Activated CD8-positive, alpha-beta T cell treated with anti-CD3 and anti-CD28 coated beads for 36 hours (primary cell): ENCODE measurements at regions of chr5 and their contacts with region 1.

Region 1: DNA sequence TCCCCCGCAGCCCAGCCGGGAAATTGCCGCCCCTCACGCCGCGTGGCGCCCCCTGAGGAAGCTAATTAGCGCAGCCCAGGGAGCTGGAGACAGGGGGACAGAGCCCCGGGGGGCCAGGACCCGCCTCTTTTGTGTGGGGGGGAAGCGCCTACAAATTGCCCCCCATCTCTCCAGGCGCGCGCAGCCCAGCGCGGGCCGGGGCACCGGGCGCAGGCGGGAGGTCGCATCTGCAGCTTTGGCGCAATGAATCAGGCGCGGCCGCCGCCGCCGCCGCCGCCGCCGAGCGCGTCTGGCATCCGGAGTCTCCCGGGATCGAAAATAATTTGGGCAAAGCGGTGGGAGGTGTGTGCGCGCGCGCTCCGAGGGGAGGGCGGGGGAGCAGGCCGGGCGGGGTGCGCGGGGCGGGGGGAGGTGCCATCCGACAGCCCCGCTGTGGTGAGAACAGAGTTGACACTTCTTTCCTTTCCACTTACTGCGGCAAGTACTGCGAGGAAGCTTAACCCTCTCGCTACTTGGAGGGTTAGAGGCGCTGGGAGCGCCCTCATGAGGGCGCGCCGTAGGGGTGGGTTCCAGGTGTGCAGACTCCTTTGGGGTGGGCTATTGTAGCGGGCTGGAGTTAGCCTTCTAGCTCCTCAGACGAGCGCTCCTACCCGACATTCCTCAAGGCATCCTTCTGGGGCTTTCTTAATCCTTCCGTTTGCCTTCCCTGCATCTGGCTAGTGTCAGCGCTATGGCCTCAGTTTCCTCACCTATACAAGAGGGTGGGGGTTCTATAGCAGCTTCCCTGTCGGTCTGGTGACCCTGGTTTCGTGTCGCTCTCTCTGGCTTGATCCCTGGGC is 63.1 kb downstream of the CXXC5 start:
- DNase-seq: peak; percentile 79
- ATAC-seq: peak; percentile 78
- H3K4me3 Mint-ChIP-seq: peak overlapping the region; percentile 60
- H3K27ac Mint-ChIP-seq: no peak overlapping the region
- H3K4me1 Mint-ChIP-seq: peaks cover 21% of the 10 kb centered on the region
- H3K27me3 Mint-ChIP-seq: no peaks in the 10 kb centered on the region
- CTCF ChIP-seq: peak; percentile 57

Region 2: DNA sequence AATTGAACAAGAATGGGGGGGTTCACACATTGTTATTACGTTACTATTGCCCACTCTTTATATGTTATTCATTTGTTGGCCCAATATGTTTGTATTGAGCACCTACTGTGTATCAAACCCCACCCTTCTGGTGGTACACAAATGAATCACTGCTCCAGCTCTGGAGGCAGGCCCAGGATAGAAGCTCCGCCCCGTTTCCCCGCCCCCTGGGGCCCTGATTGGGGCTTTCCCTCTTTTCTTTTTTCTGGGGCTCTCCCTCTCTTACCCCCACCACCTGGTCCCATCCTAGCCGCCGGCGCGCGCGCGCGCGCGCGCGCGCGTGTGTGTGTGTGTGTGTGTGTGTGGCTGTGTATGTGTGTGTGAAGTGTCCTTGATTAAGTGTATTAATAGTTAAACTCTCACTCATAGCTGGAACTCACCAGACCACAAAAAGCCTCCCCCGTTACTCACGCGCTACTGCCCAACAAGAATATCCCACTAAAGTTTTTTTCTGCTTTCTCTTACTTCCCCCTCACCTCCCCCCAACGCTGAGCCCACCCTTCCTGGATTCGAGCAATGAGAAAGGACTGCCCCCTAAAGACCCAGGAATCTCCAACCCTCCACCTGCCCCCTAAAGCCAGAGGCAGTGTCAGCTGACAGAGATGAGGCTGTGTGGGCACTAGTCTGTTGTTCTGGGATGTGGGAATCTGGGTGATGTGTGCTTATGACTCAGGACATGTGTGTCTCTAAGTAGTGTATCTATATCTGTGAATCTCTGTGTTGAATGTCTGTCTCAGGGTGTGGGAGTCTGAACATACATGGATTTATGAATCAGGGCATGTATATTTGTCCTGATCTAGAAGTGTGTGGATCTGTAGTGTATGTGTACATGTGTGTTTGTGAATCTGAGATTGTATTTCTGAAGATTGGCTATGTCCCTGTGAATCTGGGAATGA is 59.2 kb before region 1 on chr5:
- CTCF ChIA-PET with region 1: interaction called, 4 read pairs
- POLR2A ChIA-PET with region 1: interaction called, 4 read pairs
- intact Hi-C with region 1: loop called (anchors 5 kb)
- DNase-seq: peak; percentile 92
- ATAC-seq: peak; percentile 72
- H3K4me3 Mint-ChIP-seq: peak overlapping the region; percentile 7
- H3K27ac Mint-ChIP-seq: peak overlapping the region; percentile 17
- H3K4me1 Mint-ChIP-seq: peaks cover 48% of the 10 kb centered on the region
- H3K27me3 Mint-ChIP-seq: peaks cover 34% of the 10 kb centered on the region
- CTCF ChIP-seq: no peak

Region 3: GRCh38 chr5:139690064-139690802 is 21.1 kb before region 1 on chr5:
- CTCF ChIA-PET with region 1: interaction called, 11 read pairs
- POLR2A ChIA-PET with region 1: interaction called, 3 read pairs
- intact Hi-C with region 1: no loop called
- DNase-seq: peak; percentile 48
- ATAC-seq: peak; percentile 66
- H3K4me3 Mint-ChIP-seq: no peak overlapping the region
- H3K27ac Mint-ChIP-seq: no peak overlapping the region
- H3K4me1 Mint-ChIP-seq: peaks cover 7% of the 10 kb centered on the region
- H3K27me3 Mint-ChIP-seq: no peaks in the 10 kb centered on the region
- CTCF ChIP-seq: peak; percentile 53

Region 4: DNA sequence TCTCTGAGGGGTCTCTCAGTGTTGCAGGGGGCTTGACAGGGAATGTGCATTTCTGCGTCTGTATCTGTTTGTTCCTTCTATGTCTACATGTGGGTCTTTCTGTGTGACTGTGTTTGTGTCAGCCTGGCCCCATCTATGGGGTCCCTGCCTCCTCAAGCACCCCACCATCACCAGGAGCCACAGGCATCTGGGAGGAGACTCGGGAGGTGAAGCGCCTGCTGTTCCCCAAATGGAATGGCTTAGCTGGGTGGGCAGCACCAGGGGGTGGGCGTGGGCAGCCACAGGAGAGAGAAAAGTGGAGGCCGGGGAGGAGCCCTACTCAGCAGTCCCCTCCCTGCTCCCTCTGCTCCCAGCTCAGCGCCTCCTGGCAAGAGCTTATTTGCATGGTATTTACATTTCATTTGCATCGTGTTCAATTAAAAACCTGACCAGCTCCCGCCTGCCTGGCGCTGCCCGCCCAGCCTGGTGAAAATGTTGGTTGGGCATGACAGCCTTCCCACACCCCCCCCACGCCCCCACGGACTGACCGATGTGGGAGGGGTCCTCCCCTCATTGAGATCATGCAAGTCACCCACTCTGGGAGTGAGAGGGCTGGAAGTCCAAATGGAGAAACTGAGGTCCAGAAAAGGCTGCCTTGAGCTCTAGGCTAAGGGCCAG is 12.7 kb before region 1 on chr5:
- CTCF ChIA-PET with region 1: interaction called, 19 read pairs
- POLR2A ChIA-PET with region 1: interaction called, 30 read pairs
- intact Hi-C with region 1: no loop called
- DNase-seq: no peak
- ATAC-seq: no peak
- H3K4me3 Mint-ChIP-seq: no peak overlapping the region
- H3K27ac Mint-ChIP-seq: no peak overlapping the region
- H3K4me1 Mint-ChIP-seq: peaks cover 36% of the 10 kb centered on the region
- H3K27me3 Mint-ChIP-seq: peaks cover 7% of the 10 kb centered on the region
- CTCF ChIP-seq: no peak

Region 5: GRCh38 chr5:139745800-139746690 is 34.8 kb after region 1 on chr5:
- CTCF ChIA-PET with region 1: interaction called, 8 read pairs
- POLR2A ChIA-PET with region 1: interaction called, 15 read pairs
- intact Hi-C with region 1: no loop called
- DNase-seq: peak; percentile 79
- ATAC-seq: peak; percentile 22
- H3K4me3 Mint-ChIP-seq: peak overlapping the region; percentile 68
- H3K27ac Mint-ChIP-seq: peak overlapping the region; percentile 92
- H3K4me1 Mint-ChIP-seq: peaks cover 36% of the 10 kb centered on the region
- H3K27me3 Mint-ChIP-seq: peaks cover 8% of the 10 kb centered on the region
- CTCF ChIP-seq: no peak